ENCODE measurements at regions of chr7 and their contacts with region 1.

Region 1: GRCh38 chr7:94295850-94296249 is 98.8 kb upstream of the COL1A2 start:
- DNase-seq: no peak
- ATAC-seq: peak; percentile 71 to 83
- H3K4me3 ChIP-seq: peak overlapping the region; percentile 4
- H3K27ac ChIP-seq: no peak overlapping the region
- H3K4me1 ChIP-seq: no peaks in the 10 kb centered on the region
- H3K27me3 ChIP-seq: no peaks in the 10 kb centered on the region

Region 2: DNA sequence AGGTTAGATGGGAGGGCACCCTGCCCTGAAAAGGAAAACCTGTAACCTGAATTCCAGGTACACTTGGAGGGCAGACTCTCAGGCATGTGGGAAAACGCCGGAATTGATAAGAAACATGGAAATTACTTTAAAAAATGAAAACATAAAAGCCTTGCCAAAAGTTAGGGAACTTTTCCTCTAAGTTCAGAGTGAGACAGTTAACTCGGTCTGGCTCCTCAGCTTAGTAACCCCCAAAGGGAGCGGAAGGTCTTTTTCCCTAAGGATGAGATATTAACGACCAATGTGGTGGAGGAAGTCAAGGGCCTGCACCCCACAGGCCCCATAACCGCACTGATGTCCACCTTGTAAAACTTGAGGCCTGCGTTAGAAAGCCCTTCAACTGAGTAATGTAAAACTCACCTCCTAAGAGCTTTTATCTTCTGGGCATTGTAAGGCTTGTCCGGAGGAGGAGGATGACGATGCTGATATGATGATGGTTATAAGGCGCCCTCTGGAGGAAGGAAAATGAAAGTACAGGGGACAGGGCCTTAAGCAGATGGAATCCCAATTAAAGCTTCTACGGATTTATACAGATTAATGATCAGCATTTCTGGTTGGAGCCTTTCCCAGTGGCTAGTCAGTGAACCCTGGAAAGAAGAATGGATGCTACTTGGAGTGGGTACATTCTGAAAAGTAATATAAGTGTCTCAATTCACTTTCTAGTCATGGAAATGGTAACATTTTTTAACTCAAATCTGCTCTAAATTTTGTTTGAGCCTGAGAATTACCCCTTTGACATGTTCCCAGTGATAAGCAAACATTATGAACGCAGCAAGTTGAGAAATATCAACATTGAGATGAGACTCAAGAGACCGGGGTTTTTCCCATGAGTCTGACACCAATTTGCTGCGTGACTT is 99.5 kb after region 1 on chr7:
- intact Hi-C with region 1: loop called in 3 of 4 experiments (anchors 2 to 5 kb)
- DNase-seq: peak in 1 of 3 donors; percentile 19
- ATAC-seq: peak; percentile 81 to 83
- H3K4me3 ChIP-seq: peak overlapping the region; percentile 64
- H3K27ac ChIP-seq: peak overlapping the region; percentile 89
- H3K4me1 ChIP-seq: no peaks in the 10 kb centered on the region
- H3K27me3 ChIP-seq: no peaks in the 10 kb centered on the region

Region 3: DNA sequence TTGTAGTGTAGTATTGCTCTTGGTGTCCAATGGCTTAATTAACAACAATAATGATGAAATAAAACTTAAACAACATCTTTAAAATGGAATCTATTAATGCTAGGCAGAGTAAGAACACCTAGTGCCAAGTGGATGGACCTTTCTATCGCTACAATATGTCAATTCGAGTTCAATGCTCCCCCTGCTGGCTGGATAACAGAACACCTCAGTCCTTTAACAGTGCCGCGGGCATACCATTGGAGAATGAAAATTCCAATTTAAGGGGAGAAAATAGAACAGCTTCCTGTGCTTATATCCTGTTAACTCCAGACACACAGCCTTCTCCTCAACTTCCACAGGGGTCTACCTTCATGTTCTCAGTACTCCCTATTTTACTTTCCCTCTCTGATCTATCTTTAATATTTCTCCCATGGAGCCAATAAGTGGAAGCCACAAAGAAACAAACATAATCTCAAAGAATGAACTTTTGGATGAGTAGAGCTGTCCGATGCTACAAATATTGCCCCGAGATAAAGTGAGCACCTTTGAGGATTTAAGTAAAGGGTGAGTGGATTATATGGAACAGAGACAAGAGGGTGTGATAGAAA is 140.3 kb after region 1 on chr7:
- intact Hi-C with region 1: loop called in 3 of 4 experiments (anchors 5 to 10 kb)
- DNase-seq: peak in 2 of 3 donors; percentile 59 to 60
- ATAC-seq: peak; percentile 81 to 86
- H3K4me3 ChIP-seq: no peak overlapping the region
- H3K27ac ChIP-seq: no peak overlapping the region
- H3K4me1 ChIP-seq: peaks cover 2% of the 10 kb centered on the region
- H3K27me3 ChIP-seq: no peaks in the 10 kb centered on the region

Measured in right cardiac atrium (tissue), 5 donors.